ENCODE measurements at regions of chr16 and their contacts with region 1.

Region 1: GRCh38 chr16:29729116-29729521 is 16.7 kb downstream of the C16orf54 start:
- DNase-seq: peak; percentile 57
- ATAC-seq: peak; percentile 96
- H3K4me3 ChIP-seq: peak overlapping the region; percentile 15 to 38; a peak in 3 of 4 replicates
- H3K27ac ChIP-seq: no peak overlapping the region
- H3K4me1 ChIP-seq: peaks cover 4 to 10% of the 10 kb centered on the region in 2 experiments; a peak in 3 of 4 replicates
- H3K27me3 ChIP-seq: no peaks in the 10 kb centered on the region
- CTCF ChIP-seq: peak; percentile 79 to 86 (median 82)
- POLR2A ChIP-seq: no peak
- RAD21 ChIP-seq: peak; percentile 65

Region 2: DNA sequence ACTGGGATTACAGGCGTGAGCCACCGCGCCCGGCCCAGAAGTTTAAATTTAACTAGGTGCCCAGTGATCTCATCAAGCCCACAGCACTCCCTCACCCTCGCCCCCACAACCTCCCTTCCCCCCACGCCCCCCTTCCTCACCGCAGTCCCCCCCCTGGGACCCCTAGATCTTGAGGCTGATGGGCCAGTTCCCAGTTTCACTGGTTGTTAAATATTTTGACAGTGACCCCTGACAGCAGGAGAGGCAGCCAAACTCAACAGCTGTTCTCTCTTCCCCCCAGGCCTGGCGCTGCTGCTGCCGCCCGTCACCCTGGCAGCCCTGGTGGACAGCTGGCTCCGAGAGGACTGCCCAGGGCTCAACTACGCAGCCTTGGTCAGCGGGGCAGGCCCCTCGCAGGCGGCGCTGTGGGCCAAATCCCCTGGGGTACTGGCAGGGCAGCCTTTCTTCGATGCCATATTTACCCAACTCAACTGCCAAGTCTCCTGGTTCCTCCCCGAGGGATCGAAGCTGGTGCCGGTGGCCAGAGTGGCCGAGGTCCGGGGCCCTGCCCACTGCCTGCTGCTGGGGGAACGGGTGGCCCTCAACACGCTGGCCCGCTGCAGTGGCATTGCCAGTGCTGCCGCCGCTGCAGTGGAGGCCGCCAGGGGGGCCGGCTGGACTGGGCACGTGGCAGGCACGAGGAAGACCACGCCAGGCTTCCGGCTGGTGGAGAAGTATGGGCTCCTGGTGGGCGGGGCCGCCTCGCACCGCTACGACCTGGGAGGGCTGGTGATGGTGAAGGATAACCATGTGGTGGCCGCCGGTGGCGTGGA is 34.5 kb before region 1 on chr16:
- CTCF ChIA-PET with region 1: interaction called, 8 read pairs
- POLR2A ChIA-PET with region 1: no interaction called
- RAD21 ChIA-PET with region 1: interaction called in 1 of 2 experiments, 17 read pairs
- intact Hi-C with region 1: no loop called
- DNase-seq: no peak
- ATAC-seq: no peak
- H3K4me3 ChIP-seq: no peak overlapping the region
- H3K27ac ChIP-seq: no peak overlapping the region
- H3K4me1 ChIP-seq: peaks cover 0 to 6% of the 10 kb centered on the region in 2 experiments; a peak in 2 of 4 replicates
- H3K27me3 ChIP-seq: no peaks in the 10 kb centered on the region
- CTCF ChIP-seq: no peak
- POLR2A ChIP-seq: no peak
- RAD21 ChIP-seq: no peak

Region 3: GRCh38 chr16:29815793-29816693 is 86.9 kb after region 1 on chr16 and contains the start of gene PAGR1:
- CTCF ChIA-PET with region 1: no interaction called
- POLR2A ChIA-PET with region 1: no interaction called
- RAD21 ChIA-PET with region 1: no interaction called
- intact Hi-C with region 1: no loop called
- DNase-seq: peak; percentile 99
- ATAC-seq: peak; percentile 69
- H3K4me3 ChIP-seq: peak within 1 kb of the TSS; percentile 87 to 98
- H3K27ac ChIP-seq: peak within 1 kb of the TSS; percentile 98
- H3K4me1 ChIP-seq: peaks cover 32 to 78% of the 10 kb centered on the region in 2 experiments
- H3K27me3 ChIP-seq: no peaks in the 10 kb centered on the region
- CTCF ChIP-seq: peak in 2 of 3 experiments; percentile 83 to 90; a peak in 4 of 6 replicates
- POLR2A ChIP-seq: peak; percentile 85
- RAD21 ChIP-seq: no peak
- total RNA-seq, gene PAGR1: 28.9 TPM